Activated T-helper 1 cell treated with anti-CD3 and anti-CD28 coated beads, Interleukin-12 subunit alpha, Interleukin-12 subunit beta, Interleukin-2, Interleukin-4 antibody, amounts not matched to agents 30 ng/mL and 10 ng/mL and 1 ng/mL, durations not matched to agents 14 hours and 24 hours and 36 hours (primary cell): ENCODE measurements at regions of chr10 and their contacts with region 1.

Region 1: DNA sequence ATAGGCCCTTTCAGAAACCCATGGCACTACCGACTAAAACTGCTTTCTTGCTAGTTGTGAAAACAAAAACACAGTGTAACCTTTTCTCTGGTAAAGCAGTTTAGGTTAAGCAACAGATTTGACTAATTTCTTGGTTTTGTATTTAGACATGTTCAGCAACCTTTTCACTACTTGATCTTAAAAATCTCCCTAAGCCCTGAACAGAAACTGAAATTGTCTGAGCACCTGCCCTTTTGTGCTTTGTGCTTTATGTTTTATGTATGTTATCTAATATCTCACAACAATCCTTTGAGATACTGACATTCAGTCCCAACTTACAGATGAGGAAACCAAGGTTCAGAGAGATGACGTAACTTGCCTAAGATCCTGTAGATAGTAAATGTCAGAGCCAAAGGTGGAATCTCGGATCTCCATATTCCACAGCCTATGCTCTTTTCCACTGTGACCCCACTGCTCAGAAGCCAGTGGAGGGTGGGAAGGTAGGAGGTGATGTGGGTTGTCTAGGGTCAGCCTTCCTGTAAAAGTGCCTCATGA is 146.6 kb downstream of the LCOR start:
- DNase-seq: no peak
- H3K4me3 Mint-ChIP-seq: peak overlapping the region; percentile 62
- H3K27ac Mint-ChIP-seq: peak overlapping the region; percentile 88
- H3K4me1 Mint-ChIP-seq: peaks cover 25% of the 10 kb centered on the region
- H3K27me3 Mint-ChIP-seq: no peaks in the 10 kb centered on the region

Region 2: GRCh38 chr10:96891840-96892239 is 86.8 kb before region 1 on chr10:
- intact Hi-C with region 1: loop called (anchors 1 kb)
- DNase-seq: no peak
- H3K4me3 Mint-ChIP-seq: no peak overlapping the region
- H3K27ac Mint-ChIP-seq: peak overlapping the region; percentile 62
- H3K4me1 Mint-ChIP-seq: peaks cover 48% of the 10 kb centered on the region
- H3K27me3 Mint-ChIP-seq: no peaks in the 10 kb centered on the region

Region 3: GRCh38 chr10:96910488-96911395 is 67.9 kb before region 1 on chr10:
- intact Hi-C with region 1: loop called (anchors 2 kb)
- DNase-seq: no peak
- H3K4me3 Mint-ChIP-seq: no peak overlapping the region
- H3K27ac Mint-ChIP-seq: no peak overlapping the region
- H3K4me1 Mint-ChIP-seq: peaks cover 21% of the 10 kb centered on the region
- H3K27me3 Mint-ChIP-seq: no peaks in the 10 kb centered on the region

Region 4: GRCh38 chr10:97016728-97017473 is 38.2 kb after region 1 on chr10:
- intact Hi-C with region 1: loop called (anchors 1 kb)
- DNase-seq: peak; percentile 6
- H3K4me3 Mint-ChIP-seq: peak overlapping the region; percentile 48
- H3K27ac Mint-ChIP-seq: peak overlapping the region; percentile 82
- H3K4me1 Mint-ChIP-seq: peaks cover 27% of the 10 kb centered on the region
- H3K27me3 Mint-ChIP-seq: peaks cover 2% of the 10 kb centered on the region

Region 5: GRCh38 chr10:97425964-97426775 is 447.5 kb after region 1 on chr10 and contains the start of gene PGAM1:
- intact Hi-C with region 1: loop called (anchors 5 kb)
- DNase-seq: peak; percentile 98
- H3K4me3 Mint-ChIP-seq: peak within 1 kb of the TSS; percentile 94
- H3K27ac Mint-ChIP-seq: peak within 1 kb of the TSS; percentile 99
- H3K4me1 Mint-ChIP-seq: peaks cover 46% of the 10 kb centered on the region
- H3K27me3 Mint-ChIP-seq: peaks cover 2% of the 10 kb centered on the region
- total RNA-seq, gene PGAM1: 967 and 979 TPM in 2 replicates